Activated T-helper 2 cell treated with anti-CD3 and anti-CD28 coated beads, Interferon-gamma antibody, Interleukin-2, Interleukin-4, amounts not matched to agents 10 μg/mL and 5 μg/mL and 100 μg/mL, durations not matched to agents 14 hours and 24 hours and 36 hours (primary cell): ENCODE measurements at regions of chr19 and their contacts with region 1.

Region 1: GRCh38 chr19:7197760-7198696 is 96.2 kb downstream of the INSR start:
- DNase-seq: peak; percentile 91
- H3K4me3 Mint-ChIP-seq: peak overlapping the region; percentile 80
- H3K27ac Mint-ChIP-seq: peak overlapping the region; percentile 87
- H3K4me1 Mint-ChIP-seq: peaks cover 16% of the 10 kb centered on the region
- H3K27me3 Mint-ChIP-seq: peaks cover 25% of the 10 kb centered on the region

Region 2: DNA sequence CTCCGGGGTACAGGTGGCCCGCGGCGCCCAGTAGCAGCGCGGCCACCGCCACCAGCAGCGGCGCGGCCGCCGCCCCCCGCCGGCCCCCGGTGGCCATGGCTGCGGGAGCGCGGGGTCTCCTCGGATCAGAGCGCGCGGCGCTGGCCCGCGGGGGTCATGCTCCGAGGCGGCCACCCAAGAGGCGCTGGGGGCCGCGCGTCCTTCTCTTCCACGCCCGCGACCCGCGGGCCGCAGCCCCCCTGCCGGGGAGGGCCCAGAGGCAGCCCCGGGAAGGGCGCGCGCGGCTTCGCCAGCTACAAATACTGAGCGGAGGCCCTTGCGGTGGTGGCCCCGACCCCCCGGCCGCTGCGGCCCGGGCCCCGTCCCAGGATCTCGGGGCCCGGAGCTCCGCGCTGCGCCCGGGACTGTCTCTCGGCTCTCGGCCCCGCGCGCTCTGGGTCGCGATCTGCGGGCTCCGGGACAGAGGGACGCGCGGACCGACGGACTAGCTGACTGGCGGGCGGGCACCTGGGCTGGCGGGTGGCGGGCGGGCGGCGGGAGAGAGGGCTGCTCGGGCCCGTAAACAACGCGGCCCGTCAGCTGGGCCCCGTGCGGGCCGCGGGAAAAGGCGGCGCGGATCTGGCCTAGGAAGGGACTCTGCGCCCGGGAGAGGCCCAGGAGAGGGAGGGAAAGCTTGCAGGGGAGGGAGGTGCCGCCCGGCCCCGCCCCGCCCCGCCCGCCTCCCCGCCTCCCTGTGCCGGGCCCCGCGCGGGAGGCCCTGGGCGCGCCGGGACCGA is 96.0 kb after region 1 on chr19 and contains the start of gene INSR:
- intact Hi-C with region 1: loop called (anchors 1 kb)
- DNase-seq: peak; percentile 50
- H3K4me3 Mint-ChIP-seq: peak within 1 kb of the TSS; percentile 65
- H3K27ac Mint-ChIP-seq: no peak within 1 kb of the TSS
- H3K4me1 Mint-ChIP-seq: peaks cover 3% of the 10 kb centered on the region
- H3K27me3 Mint-ChIP-seq: peaks cover 33% of the 10 kb centered on the region
- total RNA-seq, gene INSR: 2.4 TPM in 2 replicates